ENCODE measurements at regions of chr9 and their contacts with region 1.

Region 1: DNA sequence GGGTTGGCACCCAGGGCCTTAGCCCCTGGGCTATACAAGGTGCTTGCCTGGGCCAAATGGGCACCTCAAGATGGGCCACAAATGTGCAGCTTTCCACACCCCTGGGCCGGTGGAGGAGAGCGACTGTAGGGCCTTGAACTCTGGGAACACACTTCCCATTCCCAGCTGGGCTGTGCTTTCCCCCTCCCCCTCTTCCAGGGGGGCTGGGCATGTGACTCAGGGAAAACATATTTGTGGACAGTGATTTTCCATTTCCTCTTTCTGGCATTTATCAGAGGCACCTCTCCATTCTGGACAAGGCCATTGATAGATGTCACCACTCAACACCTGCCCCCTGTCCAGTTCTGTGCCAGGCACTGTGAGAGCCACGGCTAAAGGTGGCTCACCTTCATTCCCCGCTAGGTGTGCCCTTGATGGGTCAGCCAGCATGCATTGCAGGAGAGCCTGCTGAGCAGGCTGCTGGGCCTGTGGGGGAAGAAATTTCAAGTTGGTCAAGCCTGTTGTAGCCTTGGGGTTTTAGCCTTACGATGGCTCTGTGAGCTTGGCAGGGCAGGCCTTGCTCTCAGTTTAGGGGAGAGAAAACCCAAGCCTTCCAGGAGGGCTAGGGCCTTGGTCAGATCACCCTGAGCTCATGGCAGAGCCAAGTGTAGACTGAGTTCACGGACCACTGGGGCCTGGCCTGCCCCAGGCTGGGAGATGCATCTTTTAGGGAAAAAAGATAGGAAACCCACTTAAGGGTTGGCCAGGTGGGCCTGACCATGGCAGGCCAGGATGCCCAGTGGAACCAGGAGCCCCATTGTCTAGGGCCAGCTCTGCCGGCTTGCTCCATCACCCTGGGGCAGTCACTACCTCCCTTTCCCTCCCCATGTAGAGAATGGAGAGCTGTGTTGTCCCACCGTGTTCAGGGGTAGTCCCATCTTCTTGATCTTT is 113.9 kb downstream of the DAB2IP start:
- DNase-seq: peak; percentile 10
- H3K4me3 ChIP-seq: no peak overlapping the region
- H3K27ac ChIP-seq: peak overlapping the region; percentile 33
- H3K27me3 ChIP-seq: no peaks in the 10 kb centered on the region
- CTCF ChIP-seq: no peak

Region 2: DNA sequence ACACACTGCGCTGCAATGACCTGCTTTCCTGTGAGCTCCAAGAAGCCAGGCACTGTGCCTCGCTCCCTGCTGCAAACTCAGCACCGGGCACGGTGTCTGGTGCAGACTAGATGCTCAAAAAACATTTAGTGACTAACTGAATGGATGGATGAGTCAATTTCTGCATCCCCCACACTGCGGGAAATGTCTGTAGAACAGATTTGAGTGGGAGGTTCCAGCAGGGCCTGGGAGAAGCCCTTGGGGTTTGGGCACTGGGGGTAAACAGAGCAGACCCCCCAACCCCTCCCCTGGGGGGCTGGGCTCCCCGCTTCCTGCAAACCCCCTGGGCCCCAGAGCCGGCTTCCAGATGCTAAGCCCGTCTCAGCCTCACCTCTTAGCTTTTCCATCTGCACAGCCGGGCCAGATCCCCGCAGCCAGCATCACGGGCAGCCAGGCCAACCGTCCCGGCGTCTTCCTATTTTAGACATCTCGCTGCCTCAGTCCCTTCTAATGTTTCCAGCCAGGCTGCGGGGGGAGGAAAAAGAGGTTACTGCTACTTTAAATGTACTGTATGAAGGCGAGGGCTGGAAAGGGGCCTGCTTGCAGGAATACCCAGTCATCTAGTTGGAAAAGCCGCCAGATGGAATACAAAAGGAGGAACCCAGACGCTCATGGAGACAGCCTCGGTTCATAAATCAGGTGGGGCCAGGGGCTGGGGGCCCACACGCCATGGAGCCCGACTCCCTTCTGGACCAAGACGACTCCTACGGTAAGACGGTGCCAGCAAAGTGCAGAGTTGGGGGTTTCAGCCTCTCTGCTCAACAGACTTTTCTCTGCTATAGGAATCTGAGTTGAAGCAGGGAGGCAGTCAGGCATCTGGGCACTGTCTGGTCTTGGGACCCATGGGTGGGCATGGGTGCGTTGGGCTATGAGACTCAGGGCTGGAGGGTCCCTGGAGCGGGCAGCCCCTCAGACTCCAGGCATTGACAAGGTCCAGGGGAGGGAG is 198.5 kb before region 1 on chr9:
- CTCF ChIA-PET with region 1: no interaction called
- POLR2A ChIA-PET with region 1: interaction called, 14 read pairs
- DNase-seq: no peak
- H3K4me3 ChIP-seq: peak overlapping the region; percentile 56
- H3K27ac ChIP-seq: peak overlapping the region; percentile 80
- H3K27me3 ChIP-seq: no peaks in the 10 kb centered on the region
- CTCF ChIP-seq: no peak

Region 3: GRCh38 chr9:121650217-121651007 is 114.9 kb before region 1 on chr9:
- CTCF ChIA-PET with region 1: no interaction called
- POLR2A ChIA-PET with region 1: no interaction called
- DNase-seq: peak; percentile 29
- H3K4me3 ChIP-seq: no peak overlapping the region
- H3K27ac ChIP-seq: no peak overlapping the region
- H3K27me3 ChIP-seq: peaks cover 2% of the 10 kb centered on the region
- CTCF ChIP-seq: no peak

Region 4: GRCh38 chr9:121783521-121784507 is 18.5 kb after region 1 on chr9:
- CTCF ChIA-PET with region 1: no interaction called
- POLR2A ChIA-PET with region 1: no interaction called
- DNase-seq: no peak
- H3K4me3 ChIP-seq: no peak overlapping the region
- H3K27ac ChIP-seq: no peak overlapping the region
- H3K27me3 ChIP-seq: no peaks in the 10 kb centered on the region
- CTCF ChIP-seq: no peak

Region 5: DNA sequence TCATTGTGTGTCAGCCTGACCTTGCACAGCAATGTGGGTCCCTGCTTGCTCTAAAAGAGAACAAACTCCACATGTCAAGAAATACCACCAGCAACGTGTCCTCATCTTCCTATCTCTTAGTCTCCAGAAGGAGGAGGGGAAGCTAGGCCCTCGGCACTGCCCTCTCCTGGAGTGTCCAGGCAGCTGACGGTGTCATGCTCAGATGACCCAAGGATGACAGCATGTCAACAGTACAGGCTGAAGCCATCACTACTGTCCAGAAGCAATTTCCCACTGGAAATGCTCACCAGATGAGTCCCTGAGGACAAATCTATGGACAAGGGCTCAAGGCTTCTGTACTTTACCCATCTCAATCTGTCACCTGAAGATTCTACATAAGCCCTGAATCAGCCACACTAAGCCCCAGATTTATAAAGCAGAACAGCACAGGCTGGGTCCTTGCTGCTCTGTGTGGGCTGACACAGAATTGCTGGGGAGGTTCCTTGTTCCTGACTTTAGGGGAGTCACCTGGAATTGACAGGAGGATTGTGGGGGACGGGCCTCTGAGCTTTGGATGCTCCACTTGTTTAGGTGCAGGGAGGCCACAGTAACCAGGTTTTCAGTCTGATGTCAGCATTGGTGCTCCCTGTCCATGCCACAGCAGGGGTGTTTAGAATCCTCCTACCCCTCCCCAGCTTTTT is 96.4 kb after region 1 on chr9:
- CTCF ChIA-PET with region 1: no interaction called
- POLR2A ChIA-PET with region 1: no interaction called
- DNase-seq: no peak
- H3K4me3 ChIP-seq: no peak overlapping the region
- H3K27ac ChIP-seq: no peak overlapping the region
- H3K27me3 ChIP-seq: no peaks in the 10 kb centered on the region
- CTCF ChIP-seq: peak; percentile 42; the same call in 1 of the 2 replicates